PC-9 (cell line): ENCODE measurements at regions of chr5 and their contacts with region 1.

Region 1: DNA sequence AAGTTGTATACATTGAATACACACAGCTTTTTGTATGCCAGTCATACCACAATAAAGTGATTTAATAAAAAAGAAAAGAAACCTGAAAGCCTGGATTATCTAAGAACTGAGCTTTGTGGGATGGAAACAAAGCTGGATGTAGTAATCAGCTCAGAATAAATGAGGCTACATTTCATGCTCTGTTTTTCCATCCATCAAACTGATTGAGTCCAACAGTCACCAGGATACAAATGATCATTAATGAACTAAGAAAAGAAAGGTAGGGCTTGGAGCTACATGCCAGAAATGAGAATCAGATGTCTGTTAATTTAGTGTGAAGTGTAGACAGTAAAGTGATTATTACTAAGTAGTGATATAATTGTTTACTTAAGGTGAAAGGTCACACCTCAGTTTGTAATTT is 109.8 kb upstream of the TARS1 start:
- DNase-seq: no peak
- H3K4me3 ChIP-seq: no peak overlapping the region
- H3K27ac ChIP-seq: no peak overlapping the region
- H3K4me1 ChIP-seq: no peaks in the 10 kb centered on the region
- H3K27me3 ChIP-seq: no peaks in the 10 kb centered on the region
- CTCF ChIP-seq: no peak

Region 2: GRCh38 chr5:32522429-32523143 is 808.4 kb before region 1 on chr5:
- CTCF ChIA-PET with region 1: interaction called, 16 read pairs
- POLR2A ChIA-PET with region 1: no interaction called
- intact Hi-C with region 1: no loop called
- DNase-seq: peak; percentile 48 to 59
- H3K4me3 ChIP-seq: no peak overlapping the region
- H3K27ac ChIP-seq: no peak overlapping the region
- H3K4me1 ChIP-seq: no peaks in the 10 kb centered on the region
- H3K27me3 ChIP-seq: peaks cover 30% of the 10 kb centered on the region
- CTCF ChIP-seq: no peak

Region 3: GRCh38 chr5:33306758-33307157 is 24.2 kb before region 1 on chr5:
- CTCF ChIA-PET with region 1: no interaction called
- POLR2A ChIA-PET with region 1: no interaction called
- intact Hi-C with region 1: no loop called
- DNase-seq: no peak
- H3K4me3 ChIP-seq: no peak overlapping the region
- H3K27ac ChIP-seq: no peak overlapping the region
- H3K4me1 ChIP-seq: no peaks in the 10 kb centered on the region
- H3K27me3 ChIP-seq: no peaks in the 10 kb centered on the region
- CTCF ChIP-seq: no peak

Region 4: GRCh38 chr5:33601881-33602280 is 270.9 kb after region 1 on chr5:
- CTCF ChIA-PET with region 1: no interaction called
- POLR2A ChIA-PET with region 1: no interaction called
- intact Hi-C with region 1: no loop called
- DNase-seq: peak in 1 of 2 experiments; percentile 12
- H3K4me3 ChIP-seq: no peak overlapping the region
- H3K27ac ChIP-seq: no peak overlapping the region
- H3K4me1 ChIP-seq: no peaks in the 10 kb centered on the region
- H3K27me3 ChIP-seq: no peaks in the 10 kb centered on the region
- CTCF ChIP-seq: no peak